Heart right ventricle (tissue), 16 donors: ENCODE measurements at regions of chrX and their contacts with region 1.

Region 1: GRCh38 chrX:134745636-134746409 is 87.6 kb upstream of the PLAC1 start:
- DNase-seq: no peak
- ATAC-seq: no peak
- H3K4me3 ChIP-seq: no peak overlapping the region
- H3K27ac ChIP-seq: no peak overlapping the region
- H3K4me1 ChIP-seq: peaks cover 0 to 4% (median 0%) of the 10 kb centered on the region in 9 donors
- H3K27me3 ChIP-seq: peaks cover 0 to 21% (median 0%) of the 10 kb centered on the region in 7 donors
- CTCF ChIP-seq: no peak

Region 2: DNA sequence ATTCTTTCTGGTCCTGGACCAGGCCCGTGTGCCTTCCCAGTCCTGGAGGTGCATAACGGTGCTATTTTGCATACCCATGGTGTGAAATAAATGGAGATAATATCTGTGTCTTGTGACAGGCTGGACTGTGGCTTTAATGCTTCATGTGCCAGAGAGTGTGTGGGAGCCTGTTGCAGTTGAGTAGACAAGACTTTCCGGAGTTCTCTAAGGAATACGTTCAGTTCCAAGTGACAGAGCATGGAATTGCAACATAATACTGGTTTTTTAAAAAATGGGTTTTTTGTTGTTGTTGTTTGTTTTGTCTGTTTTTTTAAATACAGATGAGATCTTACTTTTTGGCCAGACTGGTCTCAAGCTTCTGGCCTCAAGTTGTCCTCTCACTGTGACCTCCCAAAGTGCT is 211.9 kb before region 1 on chrX:
- intact Hi-C with region 1: loop called in 5 of 10 experiments (anchors 5 to 10 kb)
- DNase-seq: no peak
- ATAC-seq: no peak
- H3K4me3 ChIP-seq: no peak overlapping the region
- H3K27ac ChIP-seq: no peak overlapping the region
- H3K4me1 ChIP-seq: peaks cover 0 to 15% (median 0%) of the 10 kb centered on the region in 9 donors
- H3K27me3 ChIP-seq: peaks cover 0 to 9% (median 0%) of the 10 kb centered on the region in 7 donors
- CTCF ChIP-seq: no peak

Region 3: GRCh38 chrX:134706138-134706537 is 39.7 kb before region 1 on chrX:
- intact Hi-C with region 1: no loop called
- DNase-seq: no peak
- ATAC-seq: no peak
- H3K4me3 ChIP-seq: no peak overlapping the region
- H3K27ac ChIP-seq: no peak overlapping the region
- H3K4me1 ChIP-seq: no peaks in the 10 kb centered on the region
- H3K27me3 ChIP-seq: peaks cover 0 to 15% (median 0%) of the 10 kb centered on the region in 7 donors
- CTCF ChIP-seq: no peak